Activated CD8-positive, alpha-beta T cell treated with anti-CD3 and anti-CD28 coated beads, Interleukin-2, amount 10 ng/mL, durations not matched to agents 7 days and 5 days (primary cell): ENCODE measurements at regions of chr15 and their contacts with region 1.

Region 1: DNA sequence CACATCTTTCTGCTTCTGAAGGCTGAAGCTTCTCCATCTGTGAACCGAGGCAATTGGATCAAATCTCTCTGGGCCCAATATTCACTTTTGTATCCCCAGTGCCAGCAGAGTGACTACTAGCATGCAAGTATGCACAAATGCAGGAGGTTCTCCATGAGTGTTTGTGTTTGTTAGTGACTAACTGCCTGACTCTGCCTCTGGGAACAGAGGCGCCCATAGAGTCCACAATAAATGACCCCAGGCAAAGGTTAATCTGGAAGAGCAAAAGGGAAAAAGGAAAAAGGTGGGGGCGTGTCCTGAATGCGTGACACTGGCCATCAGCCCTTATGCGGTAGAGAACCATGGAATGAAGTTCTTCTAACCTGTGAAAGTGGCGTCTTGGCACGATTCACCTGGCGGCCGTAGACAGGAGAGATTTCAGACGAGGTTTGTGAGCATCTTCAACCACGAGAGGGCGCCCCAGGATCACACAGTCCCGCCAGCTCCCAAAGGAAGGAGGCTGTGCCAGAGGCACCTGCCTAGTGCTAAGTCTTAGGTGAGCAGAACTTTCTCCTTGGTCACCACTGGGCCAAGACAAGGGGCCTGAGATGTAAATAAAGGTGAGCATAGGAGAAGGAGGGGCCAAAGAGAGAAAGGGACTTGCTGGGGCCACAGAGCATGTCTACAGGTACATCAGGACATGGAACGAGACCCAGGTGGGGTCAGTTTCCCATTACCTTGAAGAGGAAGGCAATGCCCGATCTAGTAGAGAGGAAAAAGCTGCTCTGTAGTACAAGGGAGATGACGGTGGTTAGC is 44.2 kb downstream of the RBPMS2 start:
- DNase-seq: peak; percentile 90
- ATAC-seq: peak; percentile 87
- H3K4me3 Mint-ChIP-seq: no peak overlapping the region
- H3K27ac Mint-ChIP-seq: no peak overlapping the region
- H3K4me1 Mint-ChIP-seq: peaks cover 1% of the 10 kb centered on the region
- H3K27me3 Mint-ChIP-seq: peaks cover 1% of the 10 kb centered on the region

Region 2: DNA sequence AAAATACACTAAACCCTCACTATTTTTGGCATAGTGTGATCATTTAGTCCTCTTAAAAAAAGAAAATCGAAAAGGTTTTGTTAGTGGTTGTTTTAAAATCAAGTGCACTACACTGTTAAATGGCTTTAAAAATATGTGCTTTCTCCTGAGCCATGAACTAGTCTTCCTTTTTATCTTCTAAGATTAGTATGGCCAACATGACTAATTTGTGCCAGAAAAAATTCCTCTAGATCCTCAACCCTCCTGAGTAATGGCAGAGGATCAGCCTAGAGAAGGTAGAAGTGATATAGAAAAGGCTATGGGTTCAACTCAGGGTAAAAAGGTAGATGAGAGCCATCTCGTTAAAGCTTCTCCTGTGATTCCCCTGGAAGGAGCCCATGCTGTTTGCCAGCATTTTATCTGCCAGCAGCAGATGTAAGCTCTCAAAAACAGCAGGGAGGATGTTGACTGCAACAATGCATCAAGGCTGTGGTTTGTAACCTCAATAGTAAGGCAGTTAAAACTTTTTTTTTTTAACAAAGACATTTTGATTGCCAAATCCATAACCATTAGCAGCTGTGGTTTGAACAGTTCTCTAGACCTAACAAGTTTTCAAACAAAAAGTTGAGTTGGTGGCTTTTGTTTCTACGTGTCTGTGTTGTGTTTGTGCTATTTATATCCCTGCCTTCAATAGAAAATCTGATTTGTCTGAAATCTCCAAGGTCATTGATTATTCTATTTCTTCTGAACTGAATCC is 301.0 kb before region 1 on chr15:
- CTCF ChIA-PET with region 1: interaction called, 10 read pairs
- POLR2A ChIA-PET with region 1: no interaction called
- DNase-seq: peak; percentile 67
- ATAC-seq: peak; percentile 88
- H3K4me3 Mint-ChIP-seq: peak overlapping the region; percentile 61
- H3K27ac Mint-ChIP-seq: peak overlapping the region; percentile 88
- H3K4me1 Mint-ChIP-seq: peaks cover 47% of the 10 kb centered on the region
- H3K27me3 Mint-ChIP-seq: no peaks in the 10 kb centered on the region

Region 3: GRCh38 chr15:64571857-64572291 is 159.3 kb before region 1 on chr15:
- CTCF ChIA-PET with region 1: no interaction called
- POLR2A ChIA-PET with region 1: no interaction called
- DNase-seq: no peak
- ATAC-seq: no peak
- H3K4me3 Mint-ChIP-seq: no peak overlapping the region
- H3K27ac Mint-ChIP-seq: peak overlapping the region; percentile 57
- H3K4me1 Mint-ChIP-seq: peaks cover 42% of the 10 kb centered on the region
- H3K27me3 Mint-ChIP-seq: no peaks in the 10 kb centered on the region

Region 4: DNA sequence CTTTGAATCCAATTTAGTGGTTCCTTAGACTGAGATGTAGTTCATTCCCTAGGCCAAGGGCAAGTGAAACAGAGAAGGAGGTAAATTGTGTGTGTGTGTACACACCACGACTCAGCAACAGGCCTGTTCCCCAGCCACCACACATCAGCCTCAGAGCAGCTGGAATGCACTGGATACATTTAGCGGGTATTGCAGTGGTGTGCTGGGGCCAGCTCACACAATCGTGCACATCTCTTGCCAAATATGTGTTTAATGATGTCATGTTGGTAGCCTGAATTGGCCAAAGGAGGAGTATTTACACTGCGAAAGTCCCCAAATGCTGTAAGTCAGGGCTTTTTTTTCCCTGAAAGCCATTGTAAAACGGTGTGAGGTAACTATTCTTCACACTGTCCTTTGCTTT is 38.1 kb before region 1 on chr15:
- CTCF ChIA-PET with region 1: interaction called, 98 read pairs
- POLR2A ChIA-PET with region 1: no interaction called
- DNase-seq: no peak
- ATAC-seq: no peak
- H3K4me3 Mint-ChIP-seq: no peak overlapping the region
- H3K27ac Mint-ChIP-seq: no peak overlapping the region
- H3K4me1 Mint-ChIP-seq: peaks cover 9% of the 10 kb centered on the region
- H3K27me3 Mint-ChIP-seq: no peaks in the 10 kb centered on the region

Region 5: GRCh38 chr15:64717735-64718495 is 13.3 kb before region 1 on chr15:
- CTCF ChIA-PET with region 1: interaction called, 23 read pairs
- POLR2A ChIA-PET with region 1: no interaction called
- DNase-seq: no peak
- ATAC-seq: no peak
- H3K4me3 Mint-ChIP-seq: no peak overlapping the region
- H3K27ac Mint-ChIP-seq: peak overlapping the region; percentile 28
- H3K4me1 Mint-ChIP-seq: peaks cover 9% of the 10 kb centered on the region
- H3K27me3 Mint-ChIP-seq: no peaks in the 10 kb centered on the region

Region 6: DNA sequence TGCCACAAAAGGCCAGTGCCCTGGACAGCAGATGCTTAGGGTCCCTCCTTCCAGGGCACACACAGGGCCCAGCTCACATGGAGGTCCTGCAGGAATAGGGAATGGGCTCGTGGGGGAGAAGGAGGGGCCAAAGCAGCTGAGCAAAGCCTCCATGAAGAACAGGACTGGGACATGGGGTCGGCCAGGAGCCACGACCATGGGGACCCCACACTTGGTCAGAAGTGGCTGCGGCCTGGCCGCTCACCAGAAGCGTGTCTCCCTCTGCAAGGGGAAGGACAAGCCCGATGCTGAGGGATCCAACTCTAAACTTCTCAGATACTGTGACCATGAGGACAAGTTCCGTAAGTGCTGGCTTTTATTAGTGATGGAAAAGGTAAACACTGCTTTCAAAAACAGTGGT is 28.8 kb after region 1 on chr15:
- CTCF ChIA-PET with region 1: no interaction called
- POLR2A ChIA-PET with region 1: no interaction called
- DNase-seq: no peak
- ATAC-seq: no peak
- H3K4me3 Mint-ChIP-seq: no peak overlapping the region
- H3K27ac Mint-ChIP-seq: no peak overlapping the region
- H3K4me1 Mint-ChIP-seq: no peaks in the 10 kb centered on the region
- H3K27me3 Mint-ChIP-seq: peaks cover 2% of the 10 kb centered on the region

Region 7: DNA sequence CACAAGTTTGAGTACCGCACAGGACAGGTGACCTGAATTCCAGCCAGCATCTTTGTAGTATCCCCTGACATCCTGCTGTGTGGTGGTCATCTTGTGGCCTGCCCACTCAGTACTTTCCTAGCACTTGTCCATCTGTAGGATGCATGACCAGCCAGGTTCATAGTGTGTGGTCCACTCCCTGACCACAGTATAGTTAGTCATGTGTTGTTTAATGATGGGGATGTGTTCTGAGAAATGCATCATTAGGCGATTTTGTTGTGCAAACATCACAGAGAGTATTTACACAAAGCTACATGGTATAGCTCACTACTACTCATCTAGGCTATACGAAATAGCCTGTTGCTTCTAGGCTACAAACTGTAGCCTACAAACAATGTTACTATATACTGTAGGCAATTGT is 61.1 kb after region 1 on chr15:
- CTCF ChIA-PET with region 1: no interaction called
- POLR2A ChIA-PET with region 1: no interaction called
- DNase-seq: no peak
- ATAC-seq: no peak
- H3K4me3 Mint-ChIP-seq: no peak overlapping the region
- H3K27ac Mint-ChIP-seq: no peak overlapping the region
- H3K4me1 Mint-ChIP-seq: no peaks in the 10 kb centered on the region
- H3K27me3 Mint-ChIP-seq: no peaks in the 10 kb centered on the region

Region 8: GRCh38 chr15:64893481-64894394 is 162.5 kb after region 1 on chr15:
- CTCF ChIA-PET with region 1: interaction called, 12 read pairs
- POLR2A ChIA-PET with region 1: no interaction called
- DNase-seq: peak; percentile 99
- ATAC-seq: peak; percentile 80
- H3K4me3 Mint-ChIP-seq: peak overlapping the region; percentile 82
- H3K27ac Mint-ChIP-seq: peak overlapping the region; percentile 100
- H3K4me1 Mint-ChIP-seq: peaks cover 72% of the 10 kb centered on the region
- H3K27me3 Mint-ChIP-seq: no peaks in the 10 kb centered on the region

Region 9: GRCh38 chr15:65008983-65009382 is 277.8 kb after region 1 on chr15:
- CTCF ChIA-PET with region 1: interaction called, 10 read pairs
- POLR2A ChIA-PET with region 1: no interaction called
- DNase-seq: no peak
- ATAC-seq: no peak
- H3K4me3 Mint-ChIP-seq: no peak overlapping the region
- H3K27ac Mint-ChIP-seq: no peak overlapping the region
- H3K4me1 Mint-ChIP-seq: no peaks in the 10 kb centered on the region
- H3K27me3 Mint-ChIP-seq: no peaks in the 10 kb centered on the region

Region 10: DNA sequence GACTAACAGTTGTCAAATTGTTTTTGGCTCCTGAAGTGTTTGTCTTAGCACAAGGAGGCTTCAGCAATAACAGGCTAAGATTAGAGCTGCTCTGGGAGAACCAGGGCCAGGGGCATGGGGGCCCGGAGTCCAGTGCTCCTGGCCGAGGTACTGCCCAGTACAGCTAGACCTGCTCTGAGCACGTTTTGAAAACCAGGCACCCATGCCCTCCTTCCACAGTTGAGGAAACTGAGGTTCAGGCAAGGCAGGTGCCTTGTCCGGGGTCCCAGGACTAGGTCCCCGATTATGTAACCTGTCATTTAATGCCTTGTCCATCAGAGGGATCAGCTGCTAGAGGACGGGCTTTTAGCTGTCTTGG is 364.5 kb after region 1 on chr15:
- CTCF ChIA-PET with region 1: no interaction called
- POLR2A ChIA-PET with region 1: no interaction called
- DNase-seq: no peak
- ATAC-seq: no peak
- H3K4me3 Mint-ChIP-seq: no peak overlapping the region
- H3K27ac Mint-ChIP-seq: no peak overlapping the region
- H3K4me1 Mint-ChIP-seq: no peaks in the 10 kb centered on the region
- H3K27me3 Mint-ChIP-seq: no peaks in the 10 kb centered on the region